ENCODE measurements at regions of chr12 and their contacts with region 1.

Region 1: DNA sequence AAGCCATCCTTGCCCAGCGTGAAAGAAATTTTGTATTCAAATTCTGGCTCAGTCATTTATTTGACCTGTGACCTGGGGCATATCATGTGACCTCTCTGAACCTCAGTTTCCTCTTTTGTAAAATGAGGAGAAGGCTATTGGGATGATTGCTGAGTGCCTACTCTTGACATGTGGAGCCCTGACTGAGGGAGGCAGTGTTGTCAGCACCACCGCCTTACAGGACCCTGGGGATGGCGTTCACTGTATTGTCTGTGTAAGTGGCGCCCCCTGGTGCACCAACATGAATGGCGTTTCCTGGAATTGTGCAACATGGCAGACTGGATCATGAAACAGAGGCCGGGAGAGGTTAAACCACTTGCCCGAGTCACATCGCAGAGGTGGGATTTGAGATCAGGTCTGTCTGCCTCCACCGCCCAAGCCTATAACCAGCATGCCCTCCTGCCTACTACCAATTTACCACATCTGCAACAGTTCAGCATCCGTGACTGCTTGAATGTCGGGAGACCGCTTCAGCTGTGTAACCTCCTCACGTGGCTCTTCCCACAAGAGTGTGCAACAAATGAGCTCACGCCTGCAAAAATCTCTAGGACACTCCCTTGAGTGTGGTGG is 20.1 kb upstream of the CCDC63 start:
- DNase-seq: peak; percentile 64
- ATAC-seq: peak; percentile 98
- H3K4me3 ChIP-seq: peak overlapping the region; percentile 15 to 45; a peak in 3 of 4 replicates
- H3K27ac ChIP-seq: no peak overlapping the region; the same call in 1 of the 2 replicates
- H3K4me1 ChIP-seq: no peaks in the 10 kb centered on the region; the same call in 1 of the 2 replicates
- H3K27me3 ChIP-seq: no peaks in the 10 kb centered on the region
- CTCF ChIP-seq: peak; percentile 95

Region 2: DNA sequence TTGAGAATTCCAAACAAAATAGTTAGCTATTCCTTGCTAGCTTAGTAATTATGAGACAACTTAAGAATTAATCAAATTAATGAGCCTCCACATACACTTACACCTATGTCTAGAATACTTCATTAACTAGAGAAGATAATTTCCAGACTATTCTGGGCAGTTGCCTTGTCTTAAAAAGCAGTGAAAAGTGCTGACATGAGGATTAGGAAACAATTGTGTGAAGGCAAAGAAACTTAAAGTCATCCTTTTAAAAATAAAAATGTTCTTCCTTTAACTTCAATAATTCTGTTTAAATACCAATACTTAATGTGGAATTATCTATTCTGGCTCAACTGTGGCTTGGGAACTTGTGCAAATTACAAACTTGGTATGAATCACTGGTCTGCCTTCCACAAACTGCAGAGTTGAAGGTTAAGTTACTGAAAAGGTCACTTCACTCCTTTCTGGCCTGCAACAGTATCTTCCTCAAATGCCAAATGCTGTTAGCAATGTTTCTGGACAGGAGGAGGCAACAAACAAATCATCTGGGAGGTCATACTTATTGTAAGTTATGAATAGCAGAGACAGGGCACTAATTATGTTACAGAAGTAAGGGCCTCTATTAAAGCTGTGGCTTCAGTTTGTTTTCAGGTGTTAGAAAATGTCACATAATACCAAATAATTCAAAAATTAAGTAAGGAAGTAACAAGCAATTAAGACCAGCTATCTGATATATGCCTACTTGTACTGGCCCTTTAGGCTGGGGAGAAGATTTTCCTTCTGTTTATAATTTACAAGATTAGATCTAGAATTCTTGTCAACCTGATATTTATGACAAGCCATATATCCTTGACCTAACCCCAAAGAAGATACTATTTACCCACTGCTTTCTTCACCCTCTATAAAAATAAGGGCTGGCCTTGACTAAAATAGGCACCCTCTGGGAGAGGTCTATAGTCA is 262.7 kb before region 1 on chr12:
- CTCF ChIA-PET with region 1: no interaction called
- POLR2A ChIA-PET with region 1: interaction called, 11 read pairs
- in situ Hi-C with region 1: no loop called
- intact Hi-C with region 1: no loop called
- DNase-seq: no peak
- ATAC-seq: no peak
- H3K4me3 ChIP-seq: no peak overlapping the region
- H3K27ac ChIP-seq: no peak overlapping the region
- H3K4me1 ChIP-seq: peaks cover 19% of the 10 kb centered on the region; the same call in 1 of the 2 replicates
- H3K27me3 ChIP-seq: no peaks in the 10 kb centered on the region
- CTCF ChIP-seq: no peak

Region 3: GRCh38 chr12:110742718-110743570 is 83.8 kb before region 1 on chr12 and contains the start of gene PPP1CC:
- CTCF ChIA-PET with region 1: no interaction called
- POLR2A ChIA-PET with region 1: no interaction called
- in situ Hi-C with region 1: no loop called
- intact Hi-C with region 1: loop called (anchors 5 kb)
- DNase-seq: no peak
- ATAC-seq: peak; percentile 87
- H3K4me3 ChIP-seq: peak within 1 kb of the TSS; percentile 91 to 96
- H3K27ac ChIP-seq: peak within 1 kb of the TSS; percentile 95
- H3K4me1 ChIP-seq: peaks cover 43% of the 10 kb centered on the region
- H3K27me3 ChIP-seq: no peaks in the 10 kb centered on the region
- CTCF ChIP-seq: no peak
- total RNA-seq, gene PPP1CC: 219 TPM

Region 4: DNA sequence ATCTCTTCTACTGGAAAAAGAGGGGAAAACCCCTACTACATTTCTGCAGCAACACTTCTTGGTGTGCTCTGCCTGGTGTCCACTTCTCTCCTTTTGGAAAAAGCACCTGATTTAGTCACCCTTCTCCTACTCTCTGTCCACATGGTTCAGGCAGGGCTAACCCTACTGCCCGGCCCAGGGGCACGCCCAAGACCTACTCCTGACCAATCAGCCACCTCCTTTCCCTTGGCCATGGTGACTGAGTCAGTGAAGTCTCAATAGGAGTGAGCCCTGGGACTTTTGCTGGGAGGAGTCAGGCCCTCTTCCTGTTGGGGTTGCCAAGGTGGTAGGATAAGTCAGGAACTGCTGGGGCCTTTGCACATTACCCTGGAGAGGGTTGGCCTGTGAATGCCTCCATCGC is 146.2 kb after region 1 on chr12:
- CTCF ChIA-PET with region 1: no interaction called
- POLR2A ChIA-PET with region 1: no interaction called
- in situ Hi-C with region 1: no loop called
- intact Hi-C with region 1: no loop called
- DNase-seq: no peak
- ATAC-seq: no peak
- H3K4me3 ChIP-seq: no peak overlapping the region
- H3K27ac ChIP-seq: no peak overlapping the region
- H3K4me1 ChIP-seq: no peaks in the 10 kb centered on the region
- H3K27me3 ChIP-seq: no peaks in the 10 kb centered on the region
- CTCF ChIP-seq: no peak